ENCODE measurements at regions of chr17 and their contacts with region 1.

Region 1: GRCh38 chr17:40909351-40909750 is 24.3 kb upstream of the KRT20 start:
- DNase-seq: peak; percentile 92
- ATAC-seq: peak; percentile 93
- H3K4me3 ChIP-seq: no peak overlapping the region
- H3K27ac ChIP-seq: no peak overlapping the region
- H3K4me1 ChIP-seq: peaks cover 33% of the 10 kb centered on the region
- H3K27me3 ChIP-seq: no peaks in the 10 kb centered on the region
- CTCF ChIP-seq: peak; percentile 94
- EP300 ChIP-seq: no peak
- POLR2A ChIP-seq: no peak
- RAD21 ChIP-seq: peak; percentile 99

Region 2: GRCh38 chr17:40803617-40804082 is 105.7 kb before region 1 on chr17:
- CTCF ChIA-PET with region 1: interaction called, 7 read pairs
- POLR2A ChIA-PET with region 1: no interaction called
- in situ Hi-C with region 1: no loop called
- intact Hi-C with region 1: loop called (anchors 2 kb)
- DNase-seq: peak; percentile 77
- ATAC-seq: peak; percentile 99
- H3K4me3 ChIP-seq: no peak overlapping the region
- H3K27ac ChIP-seq: no peak overlapping the region
- H3K4me1 ChIP-seq: peaks cover 6% of the 10 kb centered on the region
- H3K27me3 ChIP-seq: peaks cover 0 to 11% of the 10 kb centered on the region in 2 experiments; a peak in 3 of 5 replicates
- CTCF ChIP-seq: peak; percentile 97
- EP300 ChIP-seq: no peak
- POLR2A ChIP-seq: no peak
- RAD21 ChIP-seq: peak; percentile 92

Region 3: DNA sequence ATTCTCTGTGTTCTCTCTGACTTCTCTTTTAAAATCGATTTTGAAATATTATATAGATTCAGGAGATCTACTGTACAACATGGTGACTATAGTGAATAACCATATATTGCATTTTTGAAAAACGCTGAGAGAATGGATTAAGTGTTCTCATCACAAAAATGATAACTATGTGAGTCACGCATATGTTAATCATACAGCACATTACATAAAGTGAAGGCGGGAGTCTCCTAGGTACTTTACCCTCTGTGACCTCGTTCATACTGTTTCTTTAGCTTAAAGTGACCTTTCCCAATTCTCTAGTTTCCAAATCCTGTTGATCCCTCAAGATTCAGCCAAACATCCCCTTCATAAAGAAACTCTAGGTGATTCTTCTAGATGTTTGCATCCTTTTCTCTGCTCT is 93.5 kb after region 1 on chr17:
- CTCF ChIA-PET with region 1: no interaction called
- POLR2A ChIA-PET with region 1: no interaction called
- in situ Hi-C with region 1: loop called (anchors 5 kb)
- intact Hi-C with region 1: loop called (anchors 5 kb)
- DNase-seq: peak; percentile 79
- ATAC-seq: peak; percentile 64
- H3K4me3 ChIP-seq: no peak overlapping the region
- H3K27ac ChIP-seq: peak overlapping the region; percentile 52
- H3K4me1 ChIP-seq: peaks cover 52% of the 10 kb centered on the region
- H3K27me3 ChIP-seq: no peaks in the 10 kb centered on the region
- CTCF ChIP-seq: no peak
- EP300 ChIP-seq: peak in 1 of 2 experiments; percentile 51; a peak in 1 of 4 replicates
- POLR2A ChIP-seq: no peak
- RAD21 ChIP-seq: no peak

Region 4: GRCh38 chr17:41049110-41049509 is 139.8 kb after region 1 on chr17:
- CTCF ChIA-PET with region 1: no interaction called
- POLR2A ChIA-PET with region 1: no interaction called
- in situ Hi-C with region 1: no loop called
- intact Hi-C with region 1: loop called (anchors 10 kb)
- DNase-seq: peak; percentile 63
- ATAC-seq: no peak; the same call in 2 of the 3 replicates
- H3K4me3 ChIP-seq: no peak overlapping the region
- H3K27ac ChIP-seq: peak overlapping the region; percentile 19
- H3K4me1 ChIP-seq: peaks cover 17% of the 10 kb centered on the region
- H3K27me3 ChIP-seq: no peaks in the 10 kb centered on the region
- CTCF ChIP-seq: no peak
- EP300 ChIP-seq: peak in 1 of 2 experiments; percentile 9; a peak in 1 of 4 replicates
- POLR2A ChIP-seq: no peak
- RAD21 ChIP-seq: no peak

Region 5: GRCh38 chr17:41322094-41322902 is 412.9 kb after region 1 on chr17:
- CTCF ChIA-PET with region 1: interaction called, 16 read pairs
- POLR2A ChIA-PET with region 1: no interaction called
- in situ Hi-C with region 1: loop called (anchors 5 kb)
- intact Hi-C with region 1: loop called (anchors 1 kb)
- DNase-seq: peak; percentile 38
- ATAC-seq: peak; percentile 54; the same call in 2 of the 3 replicates
- H3K4me3 ChIP-seq: no peak overlapping the region
- H3K27ac ChIP-seq: no peak overlapping the region
- H3K4me1 ChIP-seq: no peaks in the 10 kb centered on the region
- H3K27me3 ChIP-seq: peaks cover 0 to 5% of the 10 kb centered on the region in 2 experiments; a peak in 1 of 5 replicates
- CTCF ChIP-seq: peak; percentile 71
- EP300 ChIP-seq: no peak
- POLR2A ChIP-seq: no peak
- RAD21 ChIP-seq: 0 out of 2 replicates have a peak, but pooled peaks have one; percentile 35

Region 6: GRCh38 chr17:41521574-41522261 is 612.4 kb after region 1 on chr17:
- CTCF ChIA-PET with region 1: no interaction called
- POLR2A ChIA-PET with region 1: no interaction called
- in situ Hi-C with region 1: no loop called
- intact Hi-C with region 1: loop called (anchors 10 kb)
- DNase-seq: peak; percentile 81
- ATAC-seq: peak; percentile 58
- H3K4me3 ChIP-seq: peak overlapping the region in 1 of 3 experiments; percentile 5; a peak in 1 of 6 replicates
- H3K27ac ChIP-seq: no peak overlapping the region
- H3K4me1 ChIP-seq: peaks cover 65% of the 10 kb centered on the region
- H3K27me3 ChIP-seq: peaks cover 1 to 3% of the 10 kb centered on the region in 2 experiments; a peak in 3 of 5 replicates
- CTCF ChIP-seq: no peak; the same call in 1 of the 2 replicates
- EP300 ChIP-seq: no peak
- POLR2A ChIP-seq: no peak
- RAD21 ChIP-seq: no peak